ENCODE measurements at regions of chr2 and their contacts with region 1.

Region 1: DNA sequence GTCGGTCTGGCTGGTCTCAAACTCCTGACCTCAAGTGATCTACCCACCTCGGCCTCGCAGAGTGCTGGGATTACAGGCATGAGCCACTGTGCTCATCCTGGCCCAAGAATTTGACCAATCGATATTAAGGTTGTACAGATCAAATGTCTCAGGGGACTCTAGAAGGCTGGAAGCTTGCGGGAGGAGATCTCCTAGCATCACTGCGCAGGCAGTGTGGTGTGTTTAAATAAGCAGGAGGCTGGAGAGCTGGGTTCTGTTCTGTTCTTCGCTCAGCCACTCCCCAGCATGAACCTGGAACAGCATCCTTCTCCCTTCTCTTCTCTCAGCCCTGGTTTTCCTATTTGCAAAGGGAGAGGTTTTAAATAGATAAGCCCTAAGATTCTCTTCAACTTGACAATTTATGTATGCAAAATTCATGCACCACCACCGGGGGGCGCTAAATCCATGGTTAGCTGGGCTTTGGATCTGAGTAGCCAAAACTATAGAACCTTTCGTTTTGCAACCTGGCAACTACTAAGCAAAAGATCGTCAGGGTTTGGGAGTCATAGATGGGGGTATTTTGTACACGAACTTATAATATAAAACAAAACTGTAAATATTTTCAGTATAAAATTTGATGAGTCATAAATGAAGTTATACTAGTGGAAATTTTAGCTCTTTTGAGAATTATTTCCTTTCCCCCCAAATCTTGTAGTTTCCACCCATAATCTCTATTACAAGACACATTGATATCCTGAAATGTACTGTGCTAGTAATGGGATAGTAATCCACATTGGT is 60.6 kb downstream of the SLC16A14 start:
- DNase-seq: peak; percentile 70 to 71
- ATAC-seq: peak in 6 of 8 donors; percentile 42 to 83 (median 64)
- H3K4me3 ChIP-seq: peak overlapping the region in 4 of 10 donors; percentile 10 to 27 (median 16)
- H3K27ac ChIP-seq: no peak overlapping the region
- H3K4me1 ChIP-seq: peaks cover 0 to 10% (median 5%) of the 10 kb centered on the region in 9 donors
- H3K27me3 ChIP-seq: no peaks in the 10 kb centered on the region
- CTCF ChIP-seq: peak; percentile 66 to 88 (median 86)

Region 2: GRCh38 chr2:230075988-230076631 is 68.0 kb after region 1 on chr2:
- intact Hi-C with region 1: no loop called
- DNase-seq: no peak
- ATAC-seq: no peak
- H3K4me3 ChIP-seq: no peak overlapping the region
- H3K27ac ChIP-seq: no peak overlapping the region
- H3K4me1 ChIP-seq: peaks cover 0 to 14% (median 0%) of the 10 kb centered on the region in 9 donors
- H3K27me3 ChIP-seq: no peaks in the 10 kb centered on the region
- CTCF ChIP-seq: no peak

Region 3: DNA sequence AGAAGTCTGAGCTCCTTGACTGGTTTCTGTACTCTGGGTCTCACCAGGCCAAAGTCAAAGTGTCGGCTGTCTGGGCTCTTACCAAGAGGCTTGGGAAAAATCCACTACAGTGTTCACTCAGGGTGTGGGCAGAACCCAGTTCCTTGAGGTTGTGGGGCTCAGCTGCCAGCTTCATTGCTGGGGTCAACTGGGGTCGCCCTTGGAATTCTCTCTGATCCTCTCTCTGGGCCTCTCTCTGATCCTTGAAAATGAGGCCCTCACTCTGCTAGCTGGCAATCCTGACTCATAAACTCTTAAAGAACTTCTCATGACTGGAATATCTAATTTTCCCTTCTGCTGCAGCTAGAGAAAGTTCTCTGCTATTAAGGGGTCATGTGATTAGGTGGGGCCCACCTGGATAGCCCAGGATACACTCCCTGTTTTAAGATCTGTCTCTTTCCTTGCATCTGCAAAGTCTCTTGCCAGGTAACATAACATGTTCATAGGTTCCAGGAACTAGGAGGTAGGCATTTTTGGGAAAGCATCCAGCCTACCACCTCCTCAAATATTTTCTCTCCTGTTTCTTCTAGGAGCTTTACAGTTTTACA is 145.4 kb after region 1 on chr2:
- intact Hi-C with region 1: loop called in 3 of 10 experiments (anchors 2 to 5 kb)
- DNase-seq: no peak
- ATAC-seq: no peak
- H3K4me3 ChIP-seq: no peak overlapping the region
- H3K27ac ChIP-seq: no peak overlapping the region
- H3K4me1 ChIP-seq: no peaks in the 10 kb centered on the region
- H3K27me3 ChIP-seq: no peaks in the 10 kb centered on the region
- CTCF ChIP-seq: no peak

Region 4: DNA sequence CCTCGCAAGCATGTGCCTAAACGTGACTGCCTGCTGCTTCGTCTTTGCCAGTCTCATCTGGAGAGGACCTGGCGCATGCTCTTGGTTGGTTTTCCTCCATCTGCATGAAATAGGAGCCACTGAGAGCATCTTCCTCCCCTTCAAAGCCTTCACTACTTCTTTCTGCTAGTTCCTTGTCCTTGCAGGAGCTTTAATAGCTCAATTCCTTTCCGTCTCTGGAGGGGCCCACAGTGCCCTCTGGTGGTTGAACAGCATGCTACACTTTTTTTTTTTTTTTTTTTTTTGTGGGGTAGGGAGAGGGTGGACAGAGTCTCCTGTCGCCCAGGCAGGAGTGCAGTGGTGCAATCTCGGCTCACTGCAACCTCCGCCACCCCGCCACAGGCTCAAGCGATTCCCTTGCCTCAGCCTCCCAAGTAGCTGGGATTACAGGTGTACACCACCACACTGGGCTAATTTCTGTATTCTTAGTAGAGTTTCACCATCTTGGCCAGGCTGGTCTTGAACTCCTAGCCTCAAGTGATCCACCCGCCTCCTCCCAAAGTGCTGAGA is 152.1 kb after region 1 on chr2:
- intact Hi-C with region 1: loop called (anchors 1 to 5 kb)
- DNase-seq: peak; percentile 21 to 30
- ATAC-seq: peak; percentile 41 to 87 (median 71)
- H3K4me3 ChIP-seq: no peak overlapping the region
- H3K27ac ChIP-seq: no peak overlapping the region
- H3K4me1 ChIP-seq: peaks cover 0 to 8% (median 0%) of the 10 kb centered on the region in 9 donors
- H3K27me3 ChIP-seq: no peaks in the 10 kb centered on the region
- CTCF ChIP-seq: peak; percentile 68 to 90 (median 80)

Measured in heart right ventricle (tissue), 16 donors.